ENCODE measurements at regions of chr3 and their contacts with region 1.

Region 1: GRCh38 chr3:68876112-68876713 is 56.1 kb downstream of the TAFA4 start:
- DNase-seq: no peak
- ATAC-seq: no peak

Region 2: GRCh38 chr3:66938338-66938963 is 1937.8 kb before region 1 on chr3:
- intact Hi-C with region 1: loop called (anchors 10 kb)
- DNase-seq: no peak
- ATAC-seq: peak; percentile 70

Region 3: DNA sequence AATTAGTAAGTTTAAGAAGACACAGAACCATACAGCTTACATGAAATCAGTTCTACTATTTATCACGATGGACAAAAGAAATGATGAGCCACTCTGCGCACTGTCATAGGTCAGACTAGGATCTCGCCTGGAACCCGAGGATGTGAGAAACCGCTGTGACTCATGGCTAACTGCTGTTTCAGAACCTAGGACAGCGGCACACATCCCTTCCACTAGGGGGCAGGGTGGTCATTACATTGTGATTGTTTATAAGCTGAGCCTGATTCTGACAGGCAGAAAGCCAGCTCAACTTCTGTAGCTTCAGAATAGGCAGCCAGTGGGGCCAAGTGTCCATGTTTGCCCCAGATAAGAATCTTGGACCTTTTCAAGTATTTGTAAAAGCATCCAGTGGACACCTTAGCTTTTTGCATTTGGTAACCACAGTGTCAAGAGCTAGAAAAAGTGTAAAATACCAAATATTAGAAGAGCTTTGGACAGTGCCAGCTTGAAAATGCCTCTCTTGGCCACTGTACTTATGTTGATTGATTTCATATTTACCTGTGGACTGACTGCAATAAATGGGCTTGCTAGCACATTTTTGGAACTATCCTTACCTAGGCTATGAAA is 1762.3 kb before region 1 on chr3:
- intact Hi-C with region 1: loop called (anchors 5 kb)
- DNase-seq: no peak
- ATAC-seq: peak; percentile 63

Region 4: DNA sequence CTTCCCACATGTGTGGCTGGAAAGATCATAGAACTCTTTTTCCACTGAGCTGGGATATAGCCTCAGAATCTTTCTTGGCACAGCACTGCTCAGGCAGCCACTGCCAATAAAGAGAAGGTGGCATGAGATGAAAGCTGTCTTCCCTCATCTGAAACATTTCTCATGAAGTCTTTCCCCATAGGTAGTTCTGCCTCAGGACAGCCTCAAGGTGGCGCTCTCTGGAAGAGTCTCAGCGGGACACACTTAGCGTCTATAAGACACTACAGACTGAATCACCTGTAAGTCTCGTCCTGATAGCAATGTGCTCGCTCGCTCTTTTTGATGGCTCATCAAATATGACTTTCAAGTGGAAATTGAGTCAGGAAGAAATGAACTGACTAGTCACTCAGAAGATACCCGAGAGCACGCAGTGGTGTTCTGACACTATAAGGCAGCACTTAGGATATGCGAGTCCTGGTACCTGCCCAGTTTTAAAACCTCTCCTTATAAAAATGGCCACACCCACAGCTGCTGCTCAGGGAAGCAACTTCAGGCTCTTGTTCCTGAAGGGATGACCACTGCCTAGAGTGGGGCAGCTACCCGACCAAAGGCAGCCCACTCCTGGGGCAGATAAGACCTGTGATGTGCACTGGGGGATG is 1491.3 kb before region 1 on chr3:
- intact Hi-C with region 1: loop called (anchors 5 kb)
- DNase-seq: no peak
- ATAC-seq: peak; percentile 56

Region 5: DNA sequence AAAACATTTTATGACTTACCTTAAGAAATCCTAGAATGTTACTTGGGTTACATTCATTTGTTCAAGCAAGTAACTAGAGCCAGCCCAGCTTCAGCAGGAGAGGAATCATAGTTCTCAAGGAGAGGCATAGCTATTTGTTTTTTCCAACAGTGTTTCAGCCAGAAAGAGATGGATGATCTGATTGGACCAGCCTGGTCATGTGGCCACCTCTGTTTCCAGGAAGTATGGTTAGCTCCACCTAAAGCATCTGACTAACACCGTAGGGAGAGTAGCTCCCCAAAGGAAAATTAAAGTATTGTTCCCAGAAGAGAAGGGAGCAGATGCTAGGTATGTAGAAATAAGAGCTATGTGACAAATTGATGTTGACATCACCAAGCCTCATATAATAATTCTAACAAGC is 361.0 kb before region 1 on chr3:
- intact Hi-C with region 1: no loop called
- DNase-seq: no peak
- ATAC-seq: no peak

Region 6: GRCh38 chr3:68832680-68833079 is 43.5 kb before region 1 on chr3:
- intact Hi-C with region 1: no loop called
- DNase-seq: no peak
- ATAC-seq: no peak

Region 7: DNA sequence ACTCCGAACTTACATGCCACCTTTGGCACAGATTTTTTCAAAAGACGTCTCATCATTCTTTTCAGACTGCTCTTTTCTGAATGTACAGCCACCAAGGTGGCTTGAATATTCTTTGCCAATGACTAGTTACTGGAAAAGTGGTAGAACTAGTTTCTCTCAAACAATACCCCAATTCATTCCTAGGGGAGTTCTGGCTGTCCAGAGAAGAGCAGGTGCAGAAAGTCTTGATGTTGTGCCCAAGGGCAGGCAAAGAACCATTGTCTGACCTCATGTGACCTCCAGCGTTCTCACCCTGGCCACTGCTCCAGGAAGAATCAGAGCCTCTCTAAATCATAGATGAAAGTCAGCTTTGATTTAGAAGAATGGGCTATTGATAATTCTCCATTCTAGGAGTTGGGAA is 240.7 kb after region 1 on chr3:
- intact Hi-C with region 1: no loop called
- DNase-seq: no peak
- ATAC-seq: no peak

Measured in Right ventricle myocardium inferior (tissue), 1 donor.